H1 (cell line): ENCODE measurements at regions of chr10 and their contacts with region 1.

Region 1: GRCh38 chr10:88932539-88933256 is 19.9 kb downstream of the ACTA2 start:
- DNase-seq: peak in 1 of 2 experiments; percentile 52
- H3K4me3 ChIP-seq: no peak overlapping the region
- H3K27ac ChIP-seq: no peak overlapping the region
- H3K4me1 ChIP-seq: peaks cover 0 to 8% (median 3%) of the 10 kb centered on the region in 4 experiments; a peak in 3 of 7 replicates
- H3K27me3 ChIP-seq: no peaks in the 10 kb centered on the region
- CTCF ChIP-seq: peak in 2 of 3 experiments; percentile 90 to 92; a peak in 3 of 4 replicates
- EP300 ChIP-seq: peak in 1 of 2 experiments; percentile 28; a peak in 1 of 3 replicates
- POLR2A ChIP-seq: no peak
- RAD21 ChIP-seq: peak; percentile 86 to 90

Region 2: DNA sequence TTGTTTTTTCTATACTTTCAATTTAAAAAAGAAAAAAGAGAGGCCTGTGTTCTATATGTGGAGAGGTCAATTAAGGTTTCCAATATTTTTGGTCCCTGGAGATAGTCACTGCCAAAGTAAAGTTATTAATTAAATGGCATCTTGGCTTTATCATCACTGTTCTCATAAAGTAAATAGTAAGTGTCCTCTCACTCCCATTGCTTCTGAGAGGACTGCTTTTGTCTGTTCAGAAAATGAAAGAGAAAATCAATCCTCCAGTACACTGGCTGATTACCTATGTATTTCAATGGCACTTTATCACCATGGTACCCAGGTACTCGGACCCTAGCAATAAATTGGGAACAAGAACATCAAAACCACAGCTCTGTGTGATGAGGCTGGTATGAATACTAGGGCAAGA is 443.6 kb before region 1 on chr10:
- CTCF ChIA-PET with region 1: no interaction called
- POLR2A ChIA-PET with region 1: no interaction called
- DNase-seq: no peak
- H3K4me3 ChIP-seq: no peak overlapping the region
- H3K27ac ChIP-seq: no peak overlapping the region
- H3K4me1 ChIP-seq: no peaks in the 10 kb centered on the region
- H3K27me3 ChIP-seq: no peaks in the 10 kb centered on the region
- CTCF ChIP-seq: no peak
- EP300 ChIP-seq: no peak
- POLR2A ChIP-seq: no peak
- RAD21 ChIP-seq: no peak

Region 3: DNA sequence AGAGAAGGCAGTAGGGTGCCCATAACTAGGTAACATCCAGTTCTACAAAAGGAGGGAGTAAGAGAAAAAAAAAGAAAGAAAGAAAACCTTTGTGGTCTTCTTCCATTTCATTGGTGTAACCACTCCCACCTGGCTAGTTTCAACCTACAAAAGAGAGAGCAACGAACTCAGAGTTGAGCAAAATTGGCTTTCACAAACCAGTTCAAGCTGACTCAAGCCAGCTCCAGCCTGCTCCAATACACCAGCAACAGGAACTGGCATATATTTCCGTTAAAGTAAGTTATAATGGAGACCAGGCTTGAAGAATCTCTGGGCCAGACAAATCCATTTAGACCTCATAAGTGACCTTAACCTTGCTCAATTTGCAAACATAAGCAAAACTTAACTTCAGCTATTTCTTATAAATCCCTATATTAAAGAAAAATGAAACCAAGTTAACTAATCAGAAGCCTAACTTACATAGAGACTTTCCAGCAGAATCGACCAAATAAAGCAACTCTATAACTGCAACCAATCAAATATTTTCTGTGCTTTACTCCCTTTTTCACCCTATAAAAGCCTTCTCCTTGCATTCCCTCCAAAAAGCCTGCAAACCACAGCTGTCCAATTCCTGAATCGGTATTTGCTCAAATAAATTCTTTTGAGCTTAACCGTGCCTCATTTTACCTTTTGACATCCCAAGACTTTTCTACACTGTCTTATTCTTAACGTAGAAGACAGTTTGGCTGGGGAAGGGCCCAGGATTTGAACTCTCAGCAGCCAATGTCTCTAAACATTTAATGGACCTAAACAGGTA is 91.2 kb before region 1 on chr10:
- CTCF ChIA-PET with region 1: interaction called, 279 read pairs
- POLR2A ChIA-PET with region 1: no interaction called
- DNase-seq: no peak
- H3K4me3 ChIP-seq: no peak overlapping the region
- H3K27ac ChIP-seq: no peak overlapping the region
- H3K4me1 ChIP-seq: no peaks in the 10 kb centered on the region
- H3K27me3 ChIP-seq: peaks cover 0 to under 1% (median 0%) of the 10 kb centered on the region in 4 experiments; a peak in 1 of 7 replicates
- CTCF ChIP-seq: no peak
- EP300 ChIP-seq: no peak
- POLR2A ChIP-seq: no peak
- RAD21 ChIP-seq: no peak

Region 4: GRCh38 chr10:88886557-88886956 is 46.1 kb before region 1 on chr10:
- CTCF ChIA-PET with region 1: interaction called, 16 read pairs
- POLR2A ChIA-PET with region 1: interaction called, 5 read pairs
- DNase-seq: no peak
- H3K4me3 ChIP-seq: no peak overlapping the region
- H3K27ac ChIP-seq: no peak overlapping the region
- H3K4me1 ChIP-seq: no peaks in the 10 kb centered on the region; a peak in 1 of 7 replicates
- H3K27me3 ChIP-seq: no peaks in the 10 kb centered on the region
- CTCF ChIP-seq: no peak
- EP300 ChIP-seq: no peak
- POLR2A ChIP-seq: no peak
- RAD21 ChIP-seq: no peak

Region 5: GRCh38 chr10:88952647-88953111 is 20.0 kb after region 1 on chr10 and contains the start of gene ACTA2:
- CTCF ChIA-PET with region 1: interaction called, 15 read pairs
- POLR2A ChIA-PET with region 1: no interaction called
- DNase-seq: no peak
- H3K4me3 ChIP-seq: no peak within 1 kb of the TSS
- H3K27ac ChIP-seq: no peak within 1 kb of the TSS
- H3K4me1 ChIP-seq: peaks cover 0 to 7% (median 0%) of the 10 kb centered on the region in 4 experiments; a peak in 1 of 7 replicates
- H3K27me3 ChIP-seq: no peaks in the 10 kb centered on the region
- CTCF ChIP-seq: no peak
- EP300 ChIP-seq: no peak
- POLR2A ChIP-seq: no peak
- RAD21 ChIP-seq: no peak
- total RNA-seq, gene ACTA2: 2.0 and 3.5 TPM in 2 replicates

Region 6: DNA sequence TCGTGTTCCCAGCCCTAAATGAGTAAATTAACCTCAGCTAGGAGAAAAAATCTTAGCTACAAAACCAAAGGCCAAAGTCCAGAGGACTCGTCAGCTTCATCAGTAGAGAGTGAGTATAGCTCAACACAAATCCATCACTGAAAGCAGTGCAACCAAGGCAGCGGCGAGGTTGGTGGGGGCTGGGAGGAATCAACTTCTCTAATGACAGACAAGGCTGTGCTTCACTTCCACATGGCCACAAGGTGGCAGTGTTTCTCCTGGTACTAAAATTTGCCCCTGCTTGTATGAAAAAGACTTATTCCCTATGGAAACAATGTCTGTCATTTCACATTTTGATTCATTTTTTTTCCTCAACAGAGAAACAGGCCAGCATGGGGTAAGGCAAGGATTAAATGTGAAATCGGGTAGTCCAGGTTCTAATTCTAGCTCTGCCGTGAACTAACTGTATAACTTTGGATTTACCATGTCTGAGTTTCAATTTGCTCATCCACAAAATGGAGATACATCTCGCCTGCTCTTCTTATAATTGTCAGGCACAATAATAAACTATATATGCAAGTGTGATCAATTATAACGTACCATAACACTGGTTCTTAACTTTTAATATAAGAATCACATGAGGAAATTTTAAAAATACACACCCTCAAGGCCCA is 97.2 kb after region 1 on chr10:
- CTCF ChIA-PET with region 1: interaction called, 23 read pairs
- POLR2A ChIA-PET with region 1: no interaction called
- DNase-seq: peak in 1 of 2 experiments; percentile 71
- H3K4me3 ChIP-seq: no peak overlapping the region
- H3K27ac ChIP-seq: no peak overlapping the region
- H3K4me1 ChIP-seq: peaks cover 3 to 11% (median 6%) of the 10 kb centered on the region in 4 experiments; a peak in 5 of 7 replicates
- H3K27me3 ChIP-seq: no peaks in the 10 kb centered on the region
- CTCF ChIP-seq: peak; percentile 61 to 83 (median 82)
- EP300 ChIP-seq: no peak
- POLR2A ChIP-seq: no peak
- RAD21 ChIP-seq: peak; percentile 92

Region 7: DNA sequence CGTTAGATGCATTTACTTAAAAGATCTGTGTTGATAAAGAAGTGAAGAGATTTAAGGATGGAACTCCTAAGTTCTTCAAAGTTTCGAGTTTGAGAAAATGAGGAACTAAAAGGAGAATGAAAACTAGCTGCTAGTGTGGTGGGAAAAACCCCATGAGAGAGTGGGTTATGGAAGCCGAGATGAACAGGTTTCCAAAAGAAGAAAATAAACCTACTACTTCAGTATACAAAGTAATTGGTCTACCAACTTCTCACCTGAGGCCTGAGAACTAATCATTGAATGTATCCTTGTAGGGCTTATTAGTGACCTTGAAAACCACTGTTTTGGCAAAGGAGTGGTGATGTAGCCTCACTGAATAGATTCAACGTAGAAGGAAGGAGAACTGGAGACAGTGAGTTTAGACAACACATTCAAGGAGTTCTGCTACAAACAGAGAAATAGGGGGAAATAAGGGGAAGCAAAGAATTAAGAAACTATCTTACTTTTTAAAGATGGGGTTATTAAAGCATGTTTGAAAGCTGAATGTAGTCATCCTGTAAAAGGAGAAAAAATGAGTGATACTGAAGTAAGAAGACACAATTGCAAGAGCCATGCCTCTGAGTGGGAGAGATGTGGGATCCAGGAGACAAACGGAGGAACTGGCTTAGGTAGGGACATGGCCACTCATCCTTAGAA is 223.6 kb after region 1 on chr10:
- CTCF ChIA-PET with region 1: no interaction called
- POLR2A ChIA-PET with region 1: no interaction called
- DNase-seq: no peak
- H3K4me3 ChIP-seq: no peak overlapping the region
- H3K27ac ChIP-seq: no peak overlapping the region
- H3K4me1 ChIP-seq: no peaks in the 10 kb centered on the region
- H3K27me3 ChIP-seq: no peaks in the 10 kb centered on the region
- CTCF ChIP-seq: no peak
- EP300 ChIP-seq: no peak
- POLR2A ChIP-seq: no peak
- RAD21 ChIP-seq: no peak

Region 8: DNA sequence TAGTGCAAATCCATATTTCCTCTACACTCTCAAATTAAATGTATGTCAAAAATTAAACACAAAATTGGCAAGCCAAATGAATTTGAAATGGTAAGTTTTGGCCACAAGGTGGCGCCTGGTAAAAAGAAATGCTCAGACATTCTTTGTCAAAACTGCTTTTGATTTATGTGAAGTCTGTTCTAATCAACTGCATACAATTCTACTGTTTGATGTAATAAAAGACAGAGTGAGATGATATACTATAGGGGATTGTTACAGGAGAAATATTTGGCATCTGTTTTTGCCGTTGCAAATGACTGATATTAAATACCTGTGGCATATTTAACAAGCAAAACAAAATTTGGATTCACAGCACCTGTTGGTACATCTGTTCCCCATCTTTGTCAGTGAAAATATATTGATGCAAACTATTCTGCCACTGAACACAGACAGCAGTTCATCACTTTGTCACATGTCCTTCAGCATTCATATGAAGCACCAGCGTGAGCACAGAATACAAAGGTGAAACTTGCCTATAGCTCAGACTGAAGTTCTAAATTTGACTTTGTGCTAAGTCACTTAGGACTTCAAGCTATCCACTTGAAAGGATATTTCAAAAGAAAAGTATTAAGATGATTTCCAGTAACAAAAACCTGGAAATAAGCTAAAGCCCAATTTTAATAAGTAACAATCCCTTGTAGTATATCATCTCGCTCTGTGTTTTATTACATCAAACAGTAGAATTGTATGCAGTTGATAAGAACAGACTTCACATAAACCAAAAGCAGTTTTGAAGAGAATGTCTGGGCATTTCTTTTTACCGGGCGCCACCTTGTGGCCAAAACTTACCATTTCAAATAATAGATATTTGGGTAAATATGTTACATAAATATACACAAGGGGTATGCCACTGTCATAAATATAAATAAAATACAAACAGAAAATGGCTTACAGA is 284.6 kb after region 1 on chr10:
- CTCF ChIA-PET with region 1: interaction called, 50 read pairs
- POLR2A ChIA-PET with region 1: no interaction called
- DNase-seq: peak in 1 of 2 experiments; percentile 60
- H3K4me3 ChIP-seq: no peak overlapping the region
- H3K27ac ChIP-seq: no peak overlapping the region
- H3K4me1 ChIP-seq: peaks cover 0 to 6% (median 0%) of the 10 kb centered on the region in 4 experiments; a peak in 2 of 7 replicates
- H3K27me3 ChIP-seq: no peaks in the 10 kb centered on the region
- CTCF ChIP-seq: peak in 2 of 3 experiments; percentile 56; a peak in 2 of 4 replicates
- EP300 ChIP-seq: no peak
- POLR2A ChIP-seq: no peak
- RAD21 ChIP-seq: peak; percentile 65 to 69

Region 9: GRCh38 chr10:89241486-89242344 is 309.0 kb after region 1 on chr10:
- CTCF ChIA-PET with region 1: no interaction called
- POLR2A ChIA-PET with region 1: no interaction called
- DNase-seq: no peak
- H3K4me3 ChIP-seq: no peak overlapping the region
- H3K27ac ChIP-seq: no peak overlapping the region
- H3K4me1 ChIP-seq: peaks cover 3 to 16% (median 10%) of the 10 kb centered on the region in 4 experiments; a peak in 5 of 7 replicates
- H3K27me3 ChIP-seq: no peaks in the 10 kb centered on the region
- CTCF ChIP-seq: no peak
- EP300 ChIP-seq: no peak
- POLR2A ChIP-seq: no peak
- RAD21 ChIP-seq: no peak